ENCODE measurements at regions of chr11 and their contacts with region 1.

Region 1: DNA sequence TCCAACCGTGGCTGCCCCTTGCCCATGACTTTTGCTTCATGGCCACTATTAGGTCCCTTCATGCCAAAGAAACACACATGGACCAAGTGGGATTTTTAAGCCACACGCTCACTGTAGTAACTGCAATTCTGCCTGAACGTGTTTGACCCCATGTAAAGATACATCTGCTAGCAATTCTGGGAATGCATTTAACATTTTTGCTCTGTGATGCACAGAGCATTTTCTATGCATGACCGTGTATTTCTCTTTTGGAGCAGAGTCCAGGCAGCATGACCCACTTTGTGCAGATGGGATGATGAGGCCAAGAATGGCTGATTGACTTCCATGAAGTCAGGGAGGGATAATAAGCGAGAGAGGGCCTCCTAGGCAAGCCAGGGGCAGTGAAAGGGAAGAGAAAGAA is 108.5 kb downstream of the TP53I11 start:
- DNase-seq: peak; percentile 90
- H3K4me3 ChIP-seq: no peak overlapping the region
- H3K27ac ChIP-seq: peak overlapping the region; percentile 99
- H3K27me3 ChIP-seq: no peaks in the 10 kb centered on the region
- CTCF ChIP-seq: no peak

Region 2: DNA sequence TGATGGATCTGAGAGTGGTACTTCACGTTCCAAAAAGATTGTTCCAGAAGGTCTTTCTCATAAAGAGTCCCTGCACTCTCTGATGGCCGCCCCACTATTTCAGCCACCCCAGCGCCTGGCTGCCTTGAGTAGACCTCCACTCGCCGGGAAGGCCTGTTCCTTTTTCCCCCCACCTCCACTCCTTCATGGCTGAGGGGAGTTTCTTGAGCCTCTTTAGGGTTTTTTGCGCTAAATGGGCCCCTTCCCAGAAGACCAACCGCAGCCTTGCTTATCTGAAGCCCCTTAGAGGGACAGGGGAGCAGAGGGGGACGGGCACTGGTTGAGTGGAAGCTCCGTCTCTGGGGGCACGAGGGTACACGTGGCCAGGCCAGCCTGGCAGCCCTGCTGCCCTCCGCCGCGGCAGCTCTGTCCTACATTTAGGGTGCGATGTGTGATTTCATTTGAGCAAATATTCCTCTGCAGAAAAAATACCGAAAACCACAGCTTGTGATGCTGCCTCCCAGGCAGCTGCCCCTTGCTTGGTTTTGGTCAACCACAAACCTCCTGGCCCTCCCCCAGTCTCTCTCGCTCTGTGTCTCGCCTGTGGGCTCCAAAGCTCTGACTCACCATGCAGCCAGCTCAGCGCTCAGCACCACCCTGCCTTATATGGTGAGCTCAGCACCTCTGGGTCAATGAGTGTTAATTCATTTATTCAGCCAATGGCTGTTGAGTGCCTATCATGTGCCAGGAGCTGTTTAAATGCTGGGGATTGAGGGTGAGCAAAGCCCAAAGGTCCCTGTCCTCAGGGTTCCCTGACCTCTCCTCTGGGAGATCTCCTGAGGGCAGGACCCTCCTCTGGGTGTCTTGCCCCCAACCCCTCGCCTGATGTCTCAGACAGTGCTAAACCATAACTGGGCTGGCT is 19.9 kb after region 1 on chr11:
- CTCF ChIA-PET with region 1: no interaction called
- POLR2A ChIA-PET with region 1: interaction called, 10 read pairs
- DNase-seq: peak; percentile 98
- H3K4me3 ChIP-seq: peak overlapping the region; percentile 29; the same call in 1 of the 2 replicates
- H3K27ac ChIP-seq: peak overlapping the region; percentile 99
- H3K27me3 ChIP-seq: peaks cover 11% of the 10 kb centered on the region
- CTCF ChIP-seq: no peak

Measured in AG04450 (cell line).